ENCODE measurements at regions of chr1 and their contacts with region 1.

Region 1: DNA sequence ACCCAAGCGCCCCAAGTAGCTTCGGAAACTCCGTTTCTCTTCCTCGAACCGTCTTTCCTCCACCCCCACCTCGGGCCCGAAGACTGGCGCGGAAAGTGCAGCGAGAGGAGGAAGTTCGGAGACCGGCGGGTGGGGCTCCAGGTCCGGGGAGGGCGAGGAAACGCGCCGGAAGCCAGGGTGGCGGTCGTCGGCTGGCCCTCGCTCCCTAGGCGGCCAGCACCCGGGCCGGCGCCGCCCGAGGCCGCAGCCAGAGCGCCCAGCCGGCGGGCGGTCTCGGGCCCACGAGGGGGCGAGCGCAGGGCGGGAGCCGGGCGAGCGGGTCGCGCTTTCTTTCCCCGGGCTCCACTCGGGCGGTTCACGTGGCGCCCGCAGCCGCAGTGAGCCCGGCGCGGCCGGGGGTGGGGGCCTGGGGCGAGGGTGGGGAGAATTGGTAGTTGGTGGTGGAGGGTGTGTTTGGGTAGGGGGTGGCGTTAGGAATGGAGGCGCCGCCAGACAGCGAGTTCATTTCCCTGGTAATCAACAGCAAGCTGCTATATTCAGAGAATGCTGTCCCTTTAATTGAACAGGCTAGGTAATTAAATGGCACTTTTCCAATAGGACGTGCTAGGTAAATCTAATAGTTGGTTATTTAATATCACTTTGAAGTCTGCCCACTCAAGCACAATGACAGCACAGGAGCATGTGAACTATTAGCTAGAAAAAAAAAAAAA is 6.7 kb downstream of the LMO4 start:
- DNase-seq: peak; percentile 57 to 62
- H3K4me3 ChIP-seq: peak overlapping the region in 2 of 3 donors; percentile 29 to 63
- H3K27ac ChIP-seq: peak overlapping the region; percentile 31 to 80 (median 71)
- H3K4me1 ChIP-seq: peaks cover 26% of the 10 kb centered on the region in 2 donors
- H3K27me3 ChIP-seq: no peaks in the 10 kb centered on the region
- CTCF ChIP-seq: peak in 3 of 6 experiments; percentile 29 to 52 (median 50)
- POLR2A ChIP-seq: peak in 1 of 2 donors; percentile 45

Region 2: GRCh38 chr1:87464022-87464490 is 128.7 kb after region 1 on chr1:
- intact Hi-C with region 1: loop called (anchors 10 kb)
- DNase-seq: peak; percentile 30 to 44
- H3K4me3 ChIP-seq: no peak overlapping the region
- H3K27ac ChIP-seq: peak overlapping the region; percentile 32 to 64 (median 44)
- H3K4me1 ChIP-seq: peaks cover 5 to 11% of the 10 kb centered on the region in 2 donors
- H3K27me3 ChIP-seq: no peaks in the 10 kb centered on the region
- CTCF ChIP-seq: peak in 1 of 6 experiments; percentile 26
- POLR2A ChIP-seq: peak in 1 of 2 donors; percentile 8

Region 3: DNA sequence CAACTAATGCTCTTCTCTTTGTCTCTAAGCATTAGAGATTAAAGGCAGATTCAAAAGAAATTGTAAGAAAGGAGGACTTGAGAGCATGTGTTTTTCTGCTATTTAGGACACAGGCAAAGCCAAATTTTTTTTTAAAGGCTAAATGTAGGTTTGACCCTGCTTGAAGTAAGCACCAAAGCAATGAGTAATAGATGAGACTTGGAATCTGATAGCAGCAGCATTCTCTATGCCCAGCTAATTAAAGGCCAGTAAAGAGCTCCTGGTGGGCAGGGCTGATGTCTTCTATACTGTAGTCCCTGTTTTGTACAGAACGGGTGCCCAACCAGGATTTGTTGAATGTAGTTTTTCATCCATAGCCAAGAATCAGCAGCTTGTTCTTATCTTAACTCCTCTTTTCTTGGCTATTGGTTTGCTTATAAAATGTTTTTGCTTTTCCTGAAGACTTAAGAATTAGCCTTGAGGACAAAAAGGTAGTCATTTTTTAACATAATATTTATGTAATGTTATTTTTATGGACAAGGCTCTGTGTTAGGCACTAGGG is 173.0 kb after region 1 on chr1:
- intact Hi-C with region 1: loop called (anchors 5 kb)
- DNase-seq: no peak
- H3K4me3 ChIP-seq: no peak overlapping the region
- H3K27ac ChIP-seq: no peak overlapping the region
- H3K4me1 ChIP-seq: peaks cover 0 to 7% of the 10 kb centered on the region in 2 donors
- H3K27me3 ChIP-seq: no peaks in the 10 kb centered on the region
- CTCF ChIP-seq: no peak
- POLR2A ChIP-seq: no peak

Region 4: DNA sequence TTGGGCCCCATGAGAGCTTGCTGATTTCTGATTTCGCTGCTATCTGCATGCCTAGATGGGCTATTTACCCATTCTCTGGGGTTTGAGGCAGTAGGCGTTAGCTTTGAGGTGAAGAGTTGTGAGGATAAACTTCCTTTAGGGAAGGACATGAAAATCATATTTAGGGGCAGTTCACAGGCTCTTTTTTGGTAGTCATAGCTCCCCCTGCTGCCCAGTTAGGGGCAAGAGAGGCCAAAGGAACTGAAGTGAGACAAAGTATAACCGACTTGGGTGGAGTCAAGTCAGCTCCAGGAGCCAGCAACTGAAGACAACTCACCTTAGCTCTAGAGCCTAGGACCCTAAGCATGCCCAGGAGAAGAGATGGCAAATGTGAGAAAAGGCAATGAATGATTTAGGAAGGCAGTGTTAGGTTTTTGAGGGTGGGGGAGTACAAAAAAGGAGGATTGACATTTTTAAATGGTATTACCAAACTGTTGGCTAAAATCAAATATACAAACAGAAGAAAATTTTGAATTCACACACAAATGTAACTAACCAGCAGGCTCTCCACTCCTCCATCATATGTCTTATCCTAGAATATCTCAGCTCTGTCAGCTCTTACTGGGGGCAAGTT is 618.5 kb after region 1 on chr1:
- intact Hi-C with region 1: loop called (anchors 10 kb)
- DNase-seq: peak; percentile 43 to 56
- H3K4me3 ChIP-seq: no peak overlapping the region
- H3K27ac ChIP-seq: no peak overlapping the region
- H3K4me1 ChIP-seq: peaks cover 25 to 30% of the 10 kb centered on the region in 2 donors
- H3K27me3 ChIP-seq: no peaks in the 10 kb centered on the region
- CTCF ChIP-seq: peak in 5 of 6 experiments; percentile 26 to 66 (median 52)
- POLR2A ChIP-seq: no peak

Measured in thyroid gland (tissue), 4 donors.